ENCODE measurements at regions of chr15 and their contacts with region 1.

Region 1: DNA sequence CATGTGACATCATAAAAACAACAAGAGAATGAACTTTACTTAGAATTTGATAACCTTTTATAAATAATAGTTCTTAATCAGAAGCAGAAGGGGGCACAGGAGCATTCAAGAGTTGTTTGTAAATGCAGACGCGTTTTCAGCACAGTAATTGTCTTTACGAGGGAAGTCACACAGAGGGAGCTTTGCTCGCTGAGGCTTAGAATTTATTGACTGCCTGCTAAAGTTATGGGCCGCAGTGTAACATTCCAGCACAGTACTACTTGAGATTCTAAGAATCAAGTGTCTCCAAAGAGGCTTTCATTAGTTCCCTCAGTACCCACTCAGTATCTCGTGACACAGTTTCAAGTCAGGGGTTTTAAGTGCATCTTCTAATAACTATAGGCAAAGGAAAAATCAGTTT is 288.7 kb downstream of the NR2F2 start:
- DNase-seq: no peak
- ATAC-seq: no peak
- H3K4me3 ChIP-seq: no peak overlapping the region
- H3K27ac ChIP-seq: no peak overlapping the region
- H3K4me1 ChIP-seq: no peaks in the 10 kb centered on the region
- H3K27me3 ChIP-seq: peaks cover 0 to 8% (median 4%) of the 10 kb centered on the region in 7 donors
- CTCF ChIP-seq: no peak

Region 2: GRCh38 chr15:96553006-96553405 is 66.2 kb before region 1 on chr15:
- intact Hi-C with region 1: loop called in 1 of 10 experiments (anchors 10 kb)
- DNase-seq: no peak
- ATAC-seq: no peak
- H3K4me3 ChIP-seq: no peak overlapping the region
- H3K27ac ChIP-seq: no peak overlapping the region
- H3K4me1 ChIP-seq: peaks cover 0 to 11% (median 0%) of the 10 kb centered on the region in 9 donors
- H3K27me3 ChIP-seq: peaks cover 0 to 12% (median 0%) of the 10 kb centered on the region in 7 donors
- CTCF ChIP-seq: no peak

Region 3: DNA sequence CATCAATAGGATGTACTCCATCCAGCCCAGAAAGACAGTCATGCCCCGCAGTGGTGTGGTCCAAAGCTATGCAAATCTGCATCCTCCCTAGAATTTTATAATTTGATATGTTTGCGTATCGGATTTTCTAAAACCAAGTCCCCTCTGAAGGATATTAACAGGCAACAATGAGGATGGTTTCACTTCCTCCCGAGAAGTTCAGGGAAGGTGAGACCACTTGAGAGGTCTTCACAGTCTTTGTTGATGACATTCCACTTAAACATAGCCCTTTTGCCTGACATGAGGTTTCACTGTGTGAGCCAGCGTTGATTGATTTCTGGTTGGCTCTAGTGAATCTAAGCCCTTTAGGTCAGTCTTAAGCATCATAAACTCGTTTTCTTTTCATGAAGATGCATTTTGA is 12.6 kb before region 1 on chr15:
- intact Hi-C with region 1: no loop called
- DNase-seq: no peak
- ATAC-seq: no peak
- H3K4me3 ChIP-seq: no peak overlapping the region
- H3K27ac ChIP-seq: no peak overlapping the region
- H3K4me1 ChIP-seq: no peaks in the 10 kb centered on the region
- H3K27me3 ChIP-seq: peaks cover 0 to 9% (median 3%) of the 10 kb centered on the region in 7 donors
- CTCF ChIP-seq: no peak

Measured in heart right ventricle (tissue), 16 donors.